Calu3 (cell line): ENCODE measurements at regions of chr17 and their contacts with region 1.

Region 1: DNA sequence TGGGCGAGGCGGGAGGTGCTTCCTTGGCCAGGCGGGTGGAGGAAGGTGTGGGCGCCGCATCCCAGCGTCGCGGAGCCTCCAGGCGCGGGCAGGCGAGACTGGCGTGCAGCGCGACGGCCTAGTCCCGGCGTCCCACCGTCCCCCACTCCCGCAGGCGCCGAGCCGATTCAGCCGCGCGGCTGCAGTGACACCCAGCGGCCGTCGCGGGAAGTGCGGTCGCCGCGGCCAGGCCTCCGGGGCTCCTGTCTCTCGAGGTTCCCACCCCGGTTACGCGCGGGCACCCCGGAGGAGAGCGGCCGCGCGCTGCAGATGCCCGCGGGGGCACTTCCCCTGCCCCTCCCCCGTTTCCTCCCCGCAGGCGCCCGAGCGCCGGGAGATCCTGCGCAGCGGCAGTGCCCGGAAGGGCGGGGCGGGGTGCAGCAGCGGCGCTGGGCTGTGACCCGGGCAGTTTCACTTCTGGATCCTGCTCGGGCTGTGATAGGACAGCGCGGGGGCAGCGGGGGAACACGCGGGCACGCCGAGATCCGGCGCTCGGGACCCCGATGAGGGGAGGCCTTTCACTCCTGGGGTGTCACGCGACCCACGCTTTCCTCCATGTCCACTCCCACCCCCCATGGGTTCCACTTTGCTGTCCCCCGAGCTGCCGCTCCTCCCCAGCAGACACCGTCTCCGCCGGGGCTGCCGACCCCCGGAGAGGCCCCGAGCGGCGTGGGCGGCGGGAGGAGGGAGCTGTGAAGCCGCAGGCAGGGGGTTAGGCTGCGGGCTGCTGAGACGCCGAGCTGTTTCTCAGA is 16.6 kb downstream of the GRB7 start:
- DNase-seq: peak; percentile 100
- H3K4me3 Mint-ChIP-seq: peak overlapping the region; percentile 63
- H3K27ac Mint-ChIP-seq: peak overlapping the region; percentile 12
- H3K4me1 Mint-ChIP-seq: peaks cover 58% of the 10 kb centered on the region
- H3K27me3 Mint-ChIP-seq: peaks cover 35% of the 10 kb centered on the region
- CTCF ChIP-seq: no peak

Region 2: DNA sequence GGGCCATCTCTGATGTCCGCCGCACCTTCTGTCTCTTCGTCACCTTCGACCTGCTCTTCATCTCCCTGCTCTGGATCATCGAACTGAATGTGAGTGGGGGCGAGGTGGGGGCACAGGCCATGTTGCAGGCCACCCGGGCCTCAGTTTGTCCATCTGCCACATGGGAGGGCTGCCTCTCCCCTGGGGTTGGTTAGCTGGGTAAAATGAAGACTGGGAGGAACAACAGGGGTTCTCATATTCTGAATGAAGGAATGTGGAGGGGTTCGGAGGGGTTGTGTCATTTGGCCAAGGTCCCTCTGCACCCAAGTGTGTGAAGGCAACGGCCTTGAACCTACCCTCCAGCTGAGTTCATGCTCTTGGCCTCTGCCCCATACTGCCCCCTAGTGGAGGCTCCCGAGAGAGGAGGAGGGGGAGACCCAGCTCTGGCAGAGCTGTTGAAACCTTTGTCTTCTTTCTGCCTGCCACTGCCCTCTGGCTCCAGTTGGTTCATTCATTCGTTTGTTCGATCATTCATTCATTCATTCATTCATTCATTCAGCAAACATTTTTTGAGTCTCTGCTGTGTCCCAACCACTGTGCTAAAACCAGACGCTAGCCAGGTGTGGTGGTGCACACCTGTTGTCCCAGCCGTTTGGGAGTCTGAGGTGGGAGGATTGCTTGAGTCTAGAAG is 100.6 kb before region 1 on chr17:
- CTCF ChIA-PET with region 1: interaction called, 42,089 read pairs
- intact Hi-C with region 1: loop called (anchors 1 kb)
- DNase-seq: peak; percentile 100
- H3K4me3 Mint-ChIP-seq: no peak overlapping the region
- H3K27ac Mint-ChIP-seq: no peak overlapping the region
- H3K4me1 Mint-ChIP-seq: peaks cover 23% of the 10 kb centered on the region
- H3K27me3 Mint-ChIP-seq: no peaks in the 10 kb centered on the region
- CTCF ChIP-seq: no peak

Region 3: GRCh38 chr17:39730095-39730921 is 24.0 kb before region 1 on chr17 and contains the start of gene MIEN1:
- CTCF ChIA-PET with region 1: interaction called, 34,714 read pairs
- intact Hi-C with region 1: loop called (anchors 1 kb)
- DNase-seq: no peak
- H3K4me3 Mint-ChIP-seq: peak within 1 kb of the TSS; percentile 79
- H3K27ac Mint-ChIP-seq: peak within 1 kb of the TSS; percentile 90
- H3K4me1 Mint-ChIP-seq: peaks cover 34% of the 10 kb centered on the region
- H3K27me3 Mint-ChIP-seq: no peaks in the 10 kb centered on the region
- CTCF ChIP-seq: no peak
- total RNA-seq, gene MIEN1: 2,121 and 2,217 TPM in 2 replicates

Region 4: DNA sequence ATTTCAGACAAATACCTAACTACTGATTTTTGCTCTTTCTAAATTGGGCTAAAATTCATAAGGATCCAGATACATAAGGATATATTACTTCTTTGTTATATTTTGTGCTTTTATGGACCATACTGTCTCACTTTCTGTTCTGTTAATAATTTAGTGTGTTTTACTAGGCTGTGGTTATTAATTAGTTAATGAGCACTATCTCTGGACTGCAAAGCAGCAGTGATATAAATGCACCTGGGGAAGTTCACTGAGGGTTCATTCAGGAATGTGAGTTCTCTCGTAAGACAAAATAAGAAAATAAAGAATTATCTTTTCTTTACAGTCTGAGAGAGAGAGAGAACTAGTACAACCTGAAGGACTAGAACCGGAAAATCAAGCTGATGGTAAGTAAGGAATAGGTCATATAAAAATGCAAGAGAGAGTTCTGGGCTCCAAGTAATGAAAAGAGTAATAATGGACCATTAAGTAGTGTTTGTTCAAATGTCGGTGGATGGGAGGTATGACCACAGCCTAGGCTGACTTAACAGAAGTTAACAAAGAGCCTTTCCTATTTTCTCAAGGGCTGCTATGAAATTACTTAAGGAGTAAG is 54.1 kb after region 1 on chr17:
- CTCF ChIA-PET with region 1: interaction called, 127 read pairs
- intact Hi-C with region 1: loop called (anchors 1 kb)
- DNase-seq: peak; percentile 98
- H3K4me3 Mint-ChIP-seq: peak overlapping the region; percentile 1
- H3K27ac Mint-ChIP-seq: peak overlapping the region; percentile 16
- H3K4me1 Mint-ChIP-seq: peaks cover 37% of the 10 kb centered on the region
- H3K27me3 Mint-ChIP-seq: no peaks in the 10 kb centered on the region
- CTCF ChIP-seq: no peak

Region 5: DNA sequence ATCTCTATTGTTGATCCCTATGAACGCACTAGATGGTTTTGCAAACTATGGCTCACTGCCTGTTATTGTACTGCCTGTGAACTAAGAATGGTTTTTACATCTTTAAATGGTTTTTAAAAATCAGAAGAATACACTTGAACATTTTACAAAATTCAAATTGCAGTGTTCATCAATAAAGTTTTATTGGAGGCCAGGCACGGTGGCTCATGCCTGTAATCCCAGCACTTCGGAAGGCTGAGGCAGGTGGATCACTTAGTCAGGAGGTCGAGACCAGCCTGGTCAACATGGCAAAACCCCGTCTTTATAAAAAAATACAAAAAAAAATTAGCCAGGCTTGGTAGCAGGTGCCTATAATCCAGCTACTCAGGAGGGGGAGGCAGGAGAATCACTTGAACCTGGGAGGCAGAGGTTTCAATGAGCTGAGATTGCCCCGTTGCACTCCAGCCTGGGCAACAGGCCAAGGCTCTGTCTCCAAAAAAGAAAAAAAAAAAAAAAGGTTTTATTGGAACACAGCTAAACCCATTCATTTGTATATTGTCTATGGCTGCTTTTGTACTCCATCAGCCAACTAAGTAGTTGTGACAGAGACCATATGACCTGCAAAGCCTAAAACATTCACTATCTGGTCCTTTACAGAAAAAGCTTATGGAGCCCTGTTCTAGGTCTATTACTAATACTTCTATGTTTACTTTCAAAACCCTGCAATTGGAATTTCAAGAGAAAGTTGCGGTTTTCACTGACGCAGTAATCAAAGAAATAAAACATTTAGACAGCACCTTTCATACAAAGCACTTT is 90.9 kb after region 1 on chr17:
- CTCF ChIA-PET with region 1: interaction called, 53 read pairs
- intact Hi-C with region 1: no loop called
- DNase-seq: peak; percentile 81
- H3K4me3 Mint-ChIP-seq: no peak overlapping the region
- H3K27ac Mint-ChIP-seq: no peak overlapping the region
- H3K4me1 Mint-ChIP-seq: peaks cover 10% of the 10 kb centered on the region
- H3K27me3 Mint-ChIP-seq: no peaks in the 10 kb centered on the region
- CTCF ChIP-seq: no peak

Region 6: DNA sequence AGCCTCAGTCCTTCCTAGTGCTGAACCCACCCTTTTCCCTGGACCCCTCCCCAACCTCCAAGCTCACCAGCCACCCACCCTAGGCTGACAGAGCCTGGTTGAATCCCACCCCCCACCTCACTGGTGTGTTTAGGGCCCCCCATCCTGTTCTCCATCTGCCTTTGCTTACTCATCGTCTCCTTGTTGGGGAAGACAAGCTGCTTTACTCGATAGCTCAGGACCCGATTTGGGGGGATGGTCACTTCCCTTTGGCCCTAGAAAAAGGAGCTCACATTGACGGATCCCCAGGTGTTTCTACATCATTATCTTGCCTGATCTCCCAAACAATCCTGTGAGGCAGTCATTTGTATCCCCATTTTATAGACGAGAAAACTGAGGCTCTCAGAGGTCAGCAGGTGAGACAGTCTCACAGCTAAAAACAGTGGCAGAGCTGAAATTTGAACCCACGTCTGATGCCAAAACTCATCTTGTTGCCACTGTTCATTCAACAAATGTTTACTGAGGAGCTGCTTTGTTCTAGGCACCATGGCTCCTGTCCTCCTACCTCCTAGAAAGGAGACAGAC is 154.5 kb after region 1 on chr17:
- CTCF ChIA-PET with region 1: interaction called, 68 read pairs
- intact Hi-C with region 1: no loop called
- DNase-seq: peak; percentile 67
- H3K4me3 Mint-ChIP-seq: no peak overlapping the region
- H3K27ac Mint-ChIP-seq: no peak overlapping the region
- H3K4me1 Mint-ChIP-seq: no peaks in the 10 kb centered on the region
- H3K27me3 Mint-ChIP-seq: no peaks in the 10 kb centered on the region
- CTCF ChIP-seq: no peak

Region 7: DNA sequence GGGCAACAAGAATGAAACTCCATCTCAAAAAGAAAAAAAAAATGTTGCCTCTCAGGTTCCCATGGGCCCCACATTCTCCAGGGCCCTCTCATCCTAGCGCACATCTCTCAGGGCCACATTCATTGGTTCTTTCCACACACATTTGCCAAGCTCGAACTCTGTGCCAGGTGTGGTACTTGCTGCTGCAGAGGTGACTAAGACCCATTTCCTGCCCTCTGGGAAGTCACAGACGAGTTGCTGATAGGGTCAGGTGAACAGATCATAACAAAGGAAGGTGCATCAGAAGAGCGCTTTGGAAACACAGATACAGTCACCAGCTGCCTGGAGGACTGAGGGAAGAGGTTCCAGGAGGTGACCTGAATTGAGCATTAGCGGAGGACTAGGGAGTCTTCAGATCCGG is 209.5 kb after region 1 on chr17:
- CTCF ChIA-PET with region 1: interaction called, 1,070 read pairs
- intact Hi-C with region 1: loop called (anchors 1 kb)
- DNase-seq: peak; percentile 94
- H3K4me3 Mint-ChIP-seq: no peak overlapping the region
- H3K27ac Mint-ChIP-seq: peak overlapping the region; percentile 0
- H3K4me1 Mint-ChIP-seq: peaks cover 45% of the 10 kb centered on the region
- H3K27me3 Mint-ChIP-seq: peaks cover 32% of the 10 kb centered on the region
- CTCF ChIP-seq: no peak